ENCODE measurements at regions of chr16 and their contacts with region 1.

Region 1: DNA sequence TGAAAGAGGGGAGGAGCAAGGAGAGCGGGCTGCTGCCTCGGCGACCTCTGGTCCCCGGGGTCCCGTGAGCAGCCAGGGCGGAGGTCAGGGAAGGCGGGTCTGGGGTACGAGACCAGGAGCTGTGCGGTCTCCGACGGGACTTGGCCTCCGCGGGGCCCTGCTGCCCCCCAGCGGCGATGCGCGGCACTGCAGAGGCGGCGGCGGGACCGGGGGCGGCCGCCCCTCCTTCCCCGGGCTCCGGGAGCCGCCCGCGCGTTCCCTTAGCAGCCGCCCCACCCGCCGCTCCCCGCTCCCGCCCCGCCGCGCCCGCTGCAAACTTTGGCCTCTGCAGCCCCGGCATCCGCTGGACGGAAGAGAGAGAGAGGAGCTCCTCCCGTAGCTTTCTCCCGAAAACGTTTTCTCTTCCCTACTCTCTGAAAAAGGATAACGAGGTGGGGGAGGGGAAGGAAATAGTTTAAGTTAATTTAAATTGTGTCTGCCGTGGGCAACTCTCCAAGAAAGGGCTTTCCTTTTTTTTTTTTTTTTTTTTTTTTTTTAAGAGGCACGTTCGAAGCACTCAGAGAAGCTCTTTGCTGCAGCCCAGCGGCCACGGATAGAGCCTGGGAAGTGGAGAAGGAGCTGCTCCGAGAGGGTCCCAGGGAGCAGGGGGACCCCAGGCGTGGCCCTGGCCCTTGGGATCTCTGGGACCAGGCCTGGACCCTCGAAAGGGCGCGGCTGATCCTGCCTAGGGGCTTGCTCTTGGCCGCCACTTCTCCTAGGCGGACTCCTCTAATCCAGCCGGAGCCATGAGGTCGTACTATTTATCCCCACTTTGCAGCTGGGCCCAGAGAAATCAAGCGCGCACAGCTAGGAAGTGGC is 43.2 kb downstream of the C16orf82 start:
- DNase-seq: peak; percentile 83 to 91 (median 86)
- ATAC-seq: peak; percentile 78 to 95 (median 90)
- H3K4me3 ChIP-seq: peak overlapping the region in 10 of 12 donors; percentile 20 to 51 (median 38)
- H3K27ac ChIP-seq: peak overlapping the region in 11 of 12 donors; percentile 46 to 77 (median 59)
- H3K4me1 ChIP-seq: peaks cover 0 to 13% (median 7%) of the 10 kb centered on the region in 12 donors
- H3K27me3 ChIP-seq: peaks cover 0 to 16% (median 0%) of the 10 kb centered on the region in 9 donors
- CTCF ChIP-seq: peak; percentile 70 to 99 (median 92)
- POLR2A ChIP-seq: no peak

Region 2: DNA sequence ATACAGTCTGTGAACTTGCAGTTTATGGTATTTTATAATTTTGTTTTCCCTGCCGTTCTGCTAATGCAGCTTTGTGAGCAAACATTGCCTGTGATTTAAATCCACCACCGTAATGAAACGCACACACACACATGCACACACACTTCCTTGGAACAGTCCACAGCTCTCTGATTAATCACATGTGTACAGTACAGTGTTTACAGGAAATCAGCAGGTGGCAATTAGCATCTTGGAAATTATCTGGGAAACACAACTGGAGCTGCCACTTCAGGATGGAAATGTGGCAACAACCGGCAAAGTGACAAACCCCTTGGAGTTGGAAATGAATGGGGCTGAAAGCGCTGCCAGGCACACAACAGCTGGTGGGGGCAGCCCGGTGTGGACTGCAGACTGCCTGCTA is 1839.3 kb before region 1 on chr16:
- intact Hi-C with region 1: loop called in 4 of 10 experiments (anchors 5 to 10 kb)
- DNase-seq: no peak
- ATAC-seq: no peak
- H3K4me3 ChIP-seq: no peak overlapping the region
- H3K27ac ChIP-seq: no peak overlapping the region
- H3K4me1 ChIP-seq: no peaks in the 10 kb centered on the region
- H3K27me3 ChIP-seq: no peaks in the 10 kb centered on the region
- CTCF ChIP-seq: no peak
- POLR2A ChIP-seq: no peak

Region 3: GRCh38 chr16:25279491-25279890 is 1830.4 kb before region 1 on chr16:
- intact Hi-C with region 1: loop called in 4 of 10 experiments (anchors 5 to 10 kb)
- DNase-seq: no peak
- ATAC-seq: no peak
- H3K4me3 ChIP-seq: no peak overlapping the region
- H3K27ac ChIP-seq: no peak overlapping the region
- H3K4me1 ChIP-seq: no peaks in the 10 kb centered on the region
- H3K27me3 ChIP-seq: no peaks in the 10 kb centered on the region
- CTCF ChIP-seq: no peak
- POLR2A ChIP-seq: no peak

Region 4: GRCh38 chr16:27033281-27033979 is 76.5 kb before region 1 on chr16:
- intact Hi-C with region 1: no loop called
- DNase-seq: no peak
- ATAC-seq: no peak
- H3K4me3 ChIP-seq: no peak overlapping the region
- H3K27ac ChIP-seq: no peak overlapping the region
- H3K4me1 ChIP-seq: no peaks in the 10 kb centered on the region
- H3K27me3 ChIP-seq: peaks cover 0 to 3% (median 0%) of the 10 kb centered on the region in 9 donors
- CTCF ChIP-seq: no peak
- POLR2A ChIP-seq: no peak

Measured in heart left ventricle (tissue), 16 donors.